Testis (tissue), 5 donors: ENCODE measurements at regions of chr5 and their contacts with region 1.

Region 1: DNA sequence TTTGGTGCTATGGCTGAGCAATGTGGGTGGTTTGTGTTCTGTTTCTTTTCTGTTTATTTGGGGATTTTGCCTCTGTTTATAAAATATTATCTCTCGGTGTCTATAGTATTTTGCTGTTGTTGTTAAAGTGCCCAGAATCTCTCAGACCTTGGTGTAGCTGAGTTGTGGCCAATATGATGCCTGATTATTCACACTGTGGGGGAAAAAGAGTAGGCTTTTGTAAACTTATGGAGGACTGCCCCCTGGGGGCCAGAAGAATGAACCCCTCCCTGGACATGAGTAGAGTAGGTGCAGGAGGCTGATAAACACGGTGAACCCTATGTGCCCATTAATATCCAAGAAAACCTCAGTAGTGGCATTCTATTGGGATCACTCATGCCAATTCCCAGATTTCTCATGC is 49.0 kb upstream of the DPYSL3 start:
- DNase-seq: peak; percentile 46
- H3K4me3 ChIP-seq: no peak overlapping the region
- H3K27ac ChIP-seq: peak overlapping the region in 1 of 2 donors; percentile 0
- H3K4me1 ChIP-seq: peaks cover 5% of the 10 kb centered on the region
- H3K27me3 ChIP-seq: no peaks in the 10 kb centered on the region
- CTCF ChIP-seq: peak; percentile 33 to 44 (median 43)
- POLR2A ChIP-seq: no peak

Region 2: DNA sequence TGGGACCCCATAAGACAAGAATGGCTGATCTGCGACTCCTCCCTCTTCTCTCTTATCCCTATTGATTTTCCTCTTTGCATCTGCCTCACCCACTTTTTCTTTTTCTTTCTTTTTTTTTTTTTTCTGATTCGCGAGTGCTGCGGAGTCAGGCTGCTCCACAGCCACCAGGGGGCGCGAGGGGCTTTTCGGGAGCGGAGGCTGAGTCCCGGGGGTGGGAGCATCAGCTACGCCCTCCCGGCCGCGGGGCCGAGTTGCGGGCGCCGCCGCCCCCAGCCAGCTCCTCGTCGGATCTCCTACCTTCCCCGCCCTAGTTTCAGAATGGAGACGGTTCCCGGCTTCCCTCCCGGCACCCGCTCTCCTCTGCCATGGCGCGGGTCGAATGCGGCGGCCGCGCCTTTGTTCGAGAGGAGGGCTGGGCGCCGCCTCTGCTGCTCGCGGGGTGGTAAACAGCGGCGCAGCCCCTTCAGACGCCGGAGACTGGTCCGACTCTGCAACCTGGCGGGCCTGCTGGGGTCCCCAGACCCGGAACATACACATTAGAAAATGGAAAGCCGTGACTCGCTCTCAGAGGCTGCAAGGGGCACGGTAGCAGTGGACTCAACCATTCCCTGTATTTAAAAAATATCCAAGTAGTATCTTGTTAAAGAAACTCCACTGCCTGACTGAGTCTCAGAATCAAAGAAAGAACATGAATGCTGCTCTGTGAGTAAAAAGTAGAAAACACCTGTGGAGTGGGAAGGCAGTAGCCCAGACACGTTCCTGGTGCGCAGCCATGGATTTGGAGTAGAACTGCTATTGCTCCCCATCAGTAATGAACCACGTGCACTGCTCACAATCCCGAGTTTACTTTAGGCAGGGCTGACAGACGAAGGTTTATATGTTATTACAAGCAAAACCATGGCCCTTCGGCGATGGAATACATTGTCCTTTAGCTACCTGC is 104.7 kb before region 1 on chr5:
- intact Hi-C with region 1: loop called (anchors 10 kb)
- DNase-seq: peak; percentile 88
- H3K4me3 ChIP-seq: peak overlapping the region; percentile 67 to 87
- H3K27ac ChIP-seq: peak overlapping the region; percentile 83 to 91
- H3K4me1 ChIP-seq: peaks cover 8% of the 10 kb centered on the region
- H3K27me3 ChIP-seq: no peaks in the 10 kb centered on the region
- CTCF ChIP-seq: peak; percentile 82 to 98 (median 83)
- POLR2A ChIP-seq: no peak